ENCODE measurements at regions of chr3 and their contacts with region 1.

Region 1: DNA sequence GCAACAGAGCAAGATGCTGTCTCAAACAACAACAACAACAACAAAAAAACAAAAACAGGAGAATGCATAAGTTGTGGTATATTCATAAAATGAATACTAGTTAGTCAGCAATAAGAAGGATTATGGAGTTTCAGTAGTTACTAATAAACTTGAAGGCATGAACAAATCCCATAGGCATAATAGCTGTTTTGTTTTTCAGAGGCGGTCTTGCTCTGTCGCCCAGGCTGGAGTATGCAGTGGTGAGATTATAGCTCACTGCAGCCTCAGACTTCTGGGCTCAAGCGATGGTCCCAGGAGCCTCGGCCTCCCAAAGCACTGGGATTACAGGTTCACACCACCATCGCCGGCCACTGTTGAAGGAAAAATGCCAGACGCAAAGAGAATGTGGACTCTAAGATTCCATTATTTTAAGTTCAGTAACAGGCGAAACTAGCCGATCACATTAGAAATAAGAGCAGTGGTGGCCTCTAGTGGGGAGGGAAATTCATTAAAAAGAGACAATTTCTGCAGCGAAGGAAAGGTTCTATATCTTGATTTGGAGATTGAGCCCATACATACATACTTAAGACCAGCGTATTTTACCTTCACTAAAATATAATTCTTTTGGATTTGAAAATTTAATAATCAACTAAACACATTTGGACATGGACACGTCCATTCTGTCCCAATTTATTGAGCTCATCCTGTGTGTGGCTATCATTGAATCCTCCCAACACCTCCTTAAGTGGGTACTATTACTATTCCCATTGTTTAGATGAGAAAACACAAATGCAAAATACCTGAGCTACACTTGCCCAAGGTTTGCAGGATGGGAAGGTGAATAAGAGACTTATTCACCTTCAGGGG is 27.4 kb upstream of the HDAC11 start:
- DNase-seq: peak in 2 of 5 donors; percentile 32 to 37
- ATAC-seq: peak in 3 of 4 donors; percentile 51 to 63 (median 63)
- H3K4me3 ChIP-seq: peak overlapping the region in 10 of 12 donors; percentile 7 to 67 (median 55)
- H3K27ac ChIP-seq: peak overlapping the region in 9 of 12 donors; percentile 67 to 84 (median 80)
- H3K4me1 ChIP-seq: peaks cover 0 to 15% (median 5%) of the 10 kb centered on the region in 12 donors
- H3K27me3 ChIP-seq: no peaks in the 10 kb centered on the region
- CTCF ChIP-seq: peak; percentile 43 to 74 (median 60)
- POLR2A ChIP-seq: no peak

Region 2: GRCh38 chr3:12875857-12876836 is 576.6 kb before region 1 on chr3:
- intact Hi-C with region 1: loop called in 2 of 10 experiments (anchors 10 kb)
- DNase-seq: peak; percentile 31 to 80 (median 68)
- ATAC-seq: peak in 3 of 4 donors; percentile 71 to 82 (median 74)
- H3K4me3 ChIP-seq: peak overlapping the region in 9 of 12 donors; percentile 15 to 47 (median 35)
- H3K27ac ChIP-seq: no peak overlapping the region
- H3K4me1 ChIP-seq: peaks cover 0 to 11% (median 6%) of the 10 kb centered on the region in 12 donors
- H3K27me3 ChIP-seq: peaks cover 0 to 4% (median 0%) of the 10 kb centered on the region in 9 donors
- CTCF ChIP-seq: peak in 11 of 12 donors; percentile 9 to 50 (median 31)
- POLR2A ChIP-seq: no peak

Region 3: GRCh38 chr3:13083898-13084297 is 368.8 kb before region 1 on chr3:
- intact Hi-C with region 1: loop called in 1 of 10 experiments (anchors 2 kb)
- DNase-seq: no peak
- ATAC-seq: no peak
- H3K4me3 ChIP-seq: no peak overlapping the region
- H3K27ac ChIP-seq: no peak overlapping the region
- H3K4me1 ChIP-seq: peaks cover 0 to 37% (median 28%) of the 10 kb centered on the region in 12 donors
- H3K27me3 ChIP-seq: no peaks in the 10 kb centered on the region
- CTCF ChIP-seq: no peak
- POLR2A ChIP-seq: no peak

Region 4: GRCh38 chr3:13200946-13201345 is 251.8 kb before region 1 on chr3:
- intact Hi-C with region 1: loop called in 1 of 10 experiments (anchors 10 kb)
- DNase-seq: peak in 1 of 5 donors; percentile 16
- ATAC-seq: no peak
- H3K4me3 ChIP-seq: no peak overlapping the region
- H3K27ac ChIP-seq: no peak overlapping the region
- H3K4me1 ChIP-seq: peaks cover 0 to 11% (median 5%) of the 10 kb centered on the region in 12 donors
- H3K27me3 ChIP-seq: peaks cover 0 to 26% (median 14%) of the 10 kb centered on the region in 9 donors
- CTCF ChIP-seq: peak in 1 of 12 donors; percentile 8
- POLR2A ChIP-seq: no peak

Region 5: GRCh38 chr3:13308380-13308801 is 144.3 kb before region 1 on chr3:
- intact Hi-C with region 1: loop called in 1 of 10 experiments (anchors 10 kb)
- DNase-seq: no peak
- ATAC-seq: peak in 2 of 4 donors; percentile 36 to 52
- H3K4me3 ChIP-seq: no peak overlapping the region
- H3K27ac ChIP-seq: no peak overlapping the region
- H3K4me1 ChIP-seq: no peaks in the 10 kb centered on the region
- H3K27me3 ChIP-seq: no peaks in the 10 kb centered on the region
- CTCF ChIP-seq: peak in 7 of 12 donors; percentile 27 to 52 (median 42)
- POLR2A ChIP-seq: no peak

Measured in heart left ventricle (tissue), 16 donors.